Activated naive CD4-positive, alpha-beta T cell treated with anti-CD3 and anti-CD28 coated beads for 36 hours (primary cell): ENCODE measurements at regions of chr2 and their contacts with region 1.

Region 1: DNA sequence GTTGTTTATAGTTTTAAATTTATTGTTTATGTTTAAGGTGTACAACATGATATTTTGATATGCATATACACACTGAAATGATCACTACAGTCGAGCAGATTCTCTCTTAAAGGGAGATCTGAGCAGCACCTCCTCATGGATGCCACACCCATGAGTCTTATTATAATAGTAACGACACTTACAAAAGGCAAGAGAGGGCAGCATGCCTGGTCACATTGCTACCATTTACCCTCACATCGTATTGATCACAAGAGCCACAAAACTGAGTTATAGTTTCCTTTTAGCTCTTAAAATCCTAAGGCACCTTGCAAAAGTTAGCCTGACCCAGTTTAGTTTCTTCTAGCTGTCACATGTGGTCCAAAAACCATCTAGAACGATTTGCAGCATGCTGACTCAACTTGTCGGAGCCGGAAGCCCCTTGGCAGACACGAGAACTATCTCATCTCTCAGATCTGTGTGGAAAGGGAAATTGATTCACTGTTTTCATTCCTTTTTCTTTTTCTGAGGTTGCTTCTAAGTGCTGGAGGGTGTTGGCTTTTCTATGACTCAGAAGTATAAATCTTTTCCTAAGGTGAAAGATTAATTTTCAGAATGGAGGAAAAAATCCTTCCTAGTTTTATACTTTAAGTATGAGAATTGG is 85.3 kb downstream of the CDC42EP3 start:
- DNase-seq: peak; percentile 85
- H3K4me3 Mint-ChIP-seq: peak overlapping the region; percentile 25
- H3K27ac Mint-ChIP-seq: peak overlapping the region; percentile 67
- H3K4me1 Mint-ChIP-seq: peaks cover 76% of the 10 kb centered on the region
- H3K27me3 Mint-ChIP-seq: no peaks in the 10 kb centered on the region

Region 2: DNA sequence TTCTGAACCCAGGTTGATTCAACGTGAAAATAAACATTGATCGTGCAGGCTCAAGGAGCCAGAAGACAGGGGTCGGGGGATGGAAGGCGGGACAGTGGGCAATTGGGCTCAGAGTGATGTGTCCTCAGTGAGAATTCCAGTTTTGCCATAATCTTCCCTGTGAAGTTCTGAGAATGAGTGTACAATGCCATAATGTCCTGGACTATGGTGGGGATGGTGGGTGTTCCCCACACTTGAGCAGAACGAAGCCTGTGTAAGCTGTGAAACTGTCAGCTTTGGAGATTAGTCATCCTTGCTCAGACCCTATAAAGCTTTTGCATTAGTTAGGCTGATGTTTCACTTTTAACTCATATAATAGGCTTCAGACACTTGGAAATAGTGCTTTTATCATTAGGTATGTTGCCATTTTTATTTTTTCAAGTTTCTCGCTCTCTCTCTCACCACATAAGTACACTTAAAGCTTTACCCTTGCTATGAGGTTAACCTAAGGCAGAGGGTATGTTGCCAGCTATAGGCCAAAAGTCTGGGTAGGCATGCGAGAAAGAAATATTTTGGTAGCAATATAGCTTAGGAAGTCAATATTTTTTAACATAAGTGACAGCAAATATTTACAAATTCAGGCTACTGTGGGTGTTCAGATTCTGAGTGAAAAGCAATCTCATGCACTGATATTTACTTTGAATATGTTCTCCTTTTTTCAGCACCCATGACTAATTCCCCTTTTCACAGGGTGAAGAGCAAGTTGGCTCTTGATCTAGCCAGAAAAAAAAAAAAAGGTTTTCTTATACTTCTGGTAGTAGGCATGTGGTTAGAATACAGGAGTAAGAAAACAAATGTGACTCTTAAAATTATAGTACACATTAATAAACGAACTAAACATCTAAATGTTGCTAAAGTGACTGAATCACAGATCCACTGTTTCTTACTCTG is 38.1 kb after region 1 on chr2:
- CTCF ChIA-PET with region 1: interaction called, 6 read pairs
- intact Hi-C with region 1: loop called (anchors 1 kb)
- DNase-seq: peak; percentile 43
- H3K4me3 Mint-ChIP-seq: no peak overlapping the region
- H3K27ac Mint-ChIP-seq: peak overlapping the region; percentile 38
- H3K4me1 Mint-ChIP-seq: peaks cover 67% of the 10 kb centered on the region
- H3K27me3 Mint-ChIP-seq: no peaks in the 10 kb centered on the region

Region 3: GRCh38 chr2:37683921-37684780 is 98.0 kb after region 1 on chr2:
- CTCF ChIA-PET with region 1: no interaction called
- intact Hi-C with region 1: loop called (anchors 1 kb)
- DNase-seq: no peak
- H3K4me3 Mint-ChIP-seq: no peak overlapping the region
- H3K27ac Mint-ChIP-seq: peak overlapping the region; percentile 81
- H3K4me1 Mint-ChIP-seq: peaks cover 26% of the 10 kb centered on the region
- H3K27me3 Mint-ChIP-seq: no peaks in the 10 kb centered on the region

Region 4: GRCh38 chr2:37851828-37852584 is 265.9 kb after region 1 on chr2:
- CTCF ChIA-PET with region 1: no interaction called
- intact Hi-C with region 1: loop called (anchors 2 kb)
- DNase-seq: no peak
- H3K4me3 Mint-ChIP-seq: peak overlapping the region; percentile 17
- H3K27ac Mint-ChIP-seq: peak overlapping the region; percentile 81
- H3K4me1 Mint-ChIP-seq: peaks cover 26% of the 10 kb centered on the region
- H3K27me3 Mint-ChIP-seq: peaks cover 6% of the 10 kb centered on the region